PC-9 (cell line): ENCODE measurements at regions of chr12 and their contacts with region 1.

Region 1: DNA sequence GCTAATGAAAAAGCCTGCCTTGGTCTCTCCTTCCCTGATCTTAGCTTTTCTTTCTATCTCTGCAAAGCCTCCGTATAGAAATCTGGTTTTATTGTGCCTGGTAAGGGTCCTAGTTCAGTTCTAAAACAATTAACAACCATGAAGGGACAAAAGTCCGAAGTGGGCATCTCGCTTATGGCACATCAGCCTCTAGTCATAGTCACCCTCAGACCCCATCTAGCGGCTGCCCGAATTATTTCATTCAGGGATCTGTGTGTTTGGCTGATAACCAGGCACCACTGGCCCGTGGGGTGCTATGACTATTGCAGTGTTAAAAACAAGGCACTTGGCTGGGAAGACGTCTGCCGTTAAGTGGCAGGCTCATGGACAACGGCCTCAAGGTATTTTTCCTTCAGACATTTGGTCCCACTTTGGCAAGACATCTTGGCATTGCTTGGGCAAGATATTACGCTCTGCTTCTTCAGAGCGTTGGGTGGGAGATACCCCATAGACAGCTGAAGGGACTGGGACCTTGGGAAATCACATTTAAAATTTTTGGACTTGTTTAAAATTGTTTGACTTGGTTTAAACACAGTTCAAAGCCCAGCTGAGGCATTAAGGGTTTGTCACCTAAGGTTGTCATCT is 87.1 kb downstream of the SINHCAF start:
- DNase-seq: peak in 1 of 2 experiments; percentile 71
- H3K4me3 ChIP-seq: peak overlapping the region; percentile 26; the same call in 1 of the 2 replicates
- H3K27ac ChIP-seq: no peak overlapping the region
- H3K4me1 ChIP-seq: no peaks in the 10 kb centered on the region
- H3K27me3 ChIP-seq: no peaks in the 10 kb centered on the region
- CTCF ChIP-seq: peak; percentile 83

Region 2: GRCh38 chr12:30515351-30515750 is 723.5 kb before region 1 on chr12:
- CTCF ChIA-PET with region 1: no interaction called
- POLR2A ChIA-PET with region 1: no interaction called
- intact Hi-C with region 1: no loop called
- DNase-seq: no peak
- H3K4me3 ChIP-seq: no peak overlapping the region
- H3K27ac ChIP-seq: no peak overlapping the region
- H3K4me1 ChIP-seq: no peaks in the 10 kb centered on the region
- H3K27me3 ChIP-seq: no peaks in the 10 kb centered on the region
- CTCF ChIP-seq: 0 out of 2 replicates have a peak, but pooled peaks have one; percentile 28

Region 3: GRCh38 chr12:30822385-30823155 is 416.3 kb before region 1 on chr12:
- CTCF ChIA-PET with region 1: interaction called, 17 read pairs
- POLR2A ChIA-PET with region 1: no interaction called
- intact Hi-C with region 1: no loop called
- DNase-seq: peak in 1 of 2 experiments; percentile 61
- H3K4me3 ChIP-seq: no peak overlapping the region
- H3K27ac ChIP-seq: no peak overlapping the region
- H3K4me1 ChIP-seq: no peaks in the 10 kb centered on the region
- H3K27me3 ChIP-seq: no peaks in the 10 kb centered on the region
- CTCF ChIP-seq: no peak

Region 4: GRCh38 chr12:30978639-30979038 is 260.2 kb before region 1 on chr12:
- CTCF ChIA-PET with region 1: no interaction called
- POLR2A ChIA-PET with region 1: no interaction called
- intact Hi-C with region 1: loop called (anchors 5 kb)
- DNase-seq: no peak
- H3K4me3 ChIP-seq: no peak overlapping the region
- H3K27ac ChIP-seq: no peak overlapping the region
- H3K4me1 ChIP-seq: peaks cover 14% of the 10 kb centered on the region; the same call in 1 of the 2 replicates
- H3K27me3 ChIP-seq: no peaks in the 10 kb centered on the region
- CTCF ChIP-seq: no peak

Region 5: DNA sequence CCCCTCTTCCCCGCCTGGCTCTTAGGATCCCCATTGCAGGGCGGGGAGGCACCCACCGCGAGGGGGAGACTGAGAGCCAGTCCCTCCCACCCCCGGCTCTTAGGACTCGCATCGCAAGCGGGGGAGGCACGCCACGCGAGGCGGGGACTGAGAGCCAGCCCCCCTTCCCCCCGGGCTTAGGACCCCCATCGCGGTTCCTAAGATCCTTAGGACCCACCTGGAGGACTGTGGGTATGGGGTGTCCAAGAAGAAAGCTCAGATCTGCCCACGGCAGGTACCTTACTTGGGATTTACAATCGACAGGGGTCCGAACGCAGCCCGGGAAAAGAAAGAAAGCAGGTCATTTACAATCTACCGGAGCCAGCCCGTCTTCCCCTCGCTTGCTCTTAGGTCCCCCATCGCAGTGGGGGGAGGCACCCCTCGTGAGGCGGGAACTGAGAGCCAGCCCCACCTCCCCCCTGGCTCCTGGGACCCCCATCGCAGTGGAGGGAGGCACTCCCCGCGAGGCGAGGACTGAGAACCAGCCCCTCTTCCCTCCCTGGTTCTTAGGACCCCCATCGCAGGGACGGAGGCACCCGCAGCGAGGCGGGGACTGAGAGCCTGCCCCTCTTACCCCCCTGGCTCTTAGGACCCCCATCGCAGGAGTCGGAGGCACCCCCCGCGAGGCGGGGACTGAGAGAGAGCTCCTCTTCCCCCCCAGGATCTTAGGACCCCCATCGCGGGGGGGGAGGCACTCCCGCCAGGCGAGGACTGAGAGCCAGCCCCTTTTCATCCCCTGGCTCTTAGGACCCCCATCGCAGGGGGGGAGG is 121.5 kb before region 1 on chr12:
- CTCF ChIA-PET with region 1: no interaction called
- POLR2A ChIA-PET with region 1: no interaction called
- intact Hi-C with region 1: loop called (anchors 5 kb)
- DNase-seq: peak in 1 of 2 experiments; percentile 44
- H3K4me3 ChIP-seq: peak overlapping the region; percentile 54; the same call in 1 of the 2 replicates
- H3K27ac ChIP-seq: no peak overlapping the region
- H3K4me1 ChIP-seq: no peaks in the 10 kb centered on the region
- H3K27me3 ChIP-seq: no peaks in the 10 kb centered on the region
- CTCF ChIP-seq: peak; percentile 48; the same call in 1 of the 2 replicates

Region 6: DNA sequence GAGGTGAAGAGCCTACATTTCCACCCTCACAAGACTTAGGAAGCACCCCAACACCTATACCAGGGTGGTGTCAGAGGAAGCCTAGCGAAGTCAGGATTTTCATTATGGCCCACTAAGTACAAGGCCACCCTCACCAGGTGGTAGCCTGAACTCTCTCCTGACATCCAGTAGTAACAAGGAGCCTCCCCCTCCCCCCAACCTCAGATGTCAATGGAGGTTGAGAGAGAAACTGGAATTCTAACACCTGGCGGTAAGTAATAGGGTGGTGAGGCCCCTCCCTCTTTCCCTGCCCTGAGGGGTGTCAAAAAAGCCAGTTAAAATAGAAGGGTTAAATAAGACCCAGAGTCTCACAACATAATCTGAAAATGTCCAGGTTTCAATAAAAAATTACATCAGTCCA is 49.5 kb after region 1 on chr12:
- CTCF ChIA-PET with region 1: interaction called, 16 read pairs
- POLR2A ChIA-PET with region 1: no interaction called
- intact Hi-C with region 1: no loop called
- DNase-seq: no peak
- H3K4me3 ChIP-seq: no peak overlapping the region
- H3K27ac ChIP-seq: no peak overlapping the region
- H3K4me1 ChIP-seq: no peaks in the 10 kb centered on the region
- H3K27me3 ChIP-seq: no peaks in the 10 kb centered on the region
- CTCF ChIP-seq: no peak

Region 7: DNA sequence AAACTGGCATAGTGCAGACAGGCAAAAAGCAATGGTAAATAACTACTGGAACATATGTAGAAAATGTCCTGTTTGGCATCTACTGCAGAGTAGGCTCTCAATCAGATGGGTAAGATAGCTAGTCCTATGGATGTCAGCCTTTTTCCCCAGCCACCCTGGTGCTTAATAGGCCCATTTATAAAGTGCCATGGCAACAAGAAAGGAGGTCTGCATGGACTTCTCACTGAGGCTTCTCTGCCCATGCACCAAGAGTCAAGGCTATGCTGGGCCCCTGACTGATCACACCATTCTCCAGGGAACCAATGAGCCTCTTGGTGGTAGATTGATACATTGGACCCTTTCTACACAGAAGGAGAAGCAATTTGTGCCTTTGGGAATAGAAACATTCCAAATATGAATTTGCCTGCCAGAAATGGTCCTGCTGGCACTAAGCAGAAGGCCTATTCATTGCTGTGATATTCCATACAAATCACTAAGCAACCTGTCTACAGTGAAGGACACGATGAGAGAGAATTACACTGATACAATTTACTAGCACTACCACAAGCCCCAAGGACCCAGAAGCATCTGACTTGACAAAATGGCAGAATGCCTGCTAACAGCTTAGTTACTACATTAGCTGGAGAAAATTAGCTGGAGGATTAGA is 764.1 kb after region 1 on chr12:
- CTCF ChIA-PET with region 1: no interaction called
- POLR2A ChIA-PET with region 1: no interaction called
- intact Hi-C with region 1: no loop called
- DNase-seq: no peak
- H3K4me3 ChIP-seq: no peak overlapping the region
- H3K27ac ChIP-seq: no peak overlapping the region
- H3K4me1 ChIP-seq: no peaks in the 10 kb centered on the region
- H3K27me3 ChIP-seq: no peaks in the 10 kb centered on the region
- CTCF ChIP-seq: no peak

Region 8: DNA sequence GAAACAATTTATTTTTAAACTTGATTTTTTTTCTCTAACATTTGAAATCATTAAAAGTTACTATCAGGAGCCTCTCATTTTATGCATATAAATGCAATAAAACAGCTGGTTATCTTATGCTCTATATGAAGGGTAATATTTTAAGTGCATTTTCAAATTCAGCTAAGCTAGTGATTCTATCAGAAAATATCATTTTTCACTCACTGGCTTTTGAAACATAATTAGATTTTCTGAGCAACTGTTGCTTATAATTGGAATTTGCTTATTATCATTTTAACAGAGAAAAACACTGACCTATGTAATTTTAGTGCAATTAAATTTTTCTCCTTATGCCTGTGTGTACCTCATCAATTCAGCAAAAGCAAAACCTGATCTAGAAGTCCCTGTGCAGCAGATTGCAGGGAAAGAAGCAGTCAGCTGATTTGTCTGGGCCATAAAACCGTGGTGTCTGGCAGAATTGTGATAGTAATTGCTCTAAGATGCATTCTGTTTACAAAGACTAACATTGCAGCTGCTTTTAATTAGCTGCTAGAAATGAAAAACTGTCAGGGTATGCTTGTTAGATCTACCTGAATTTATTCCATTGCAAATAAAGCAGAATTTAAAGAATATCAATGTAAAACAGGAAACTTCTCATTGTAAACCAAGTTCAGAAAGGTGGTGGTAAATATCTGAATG is 942.8 kb after region 1 on chr12:
- CTCF ChIA-PET with region 1: no interaction called
- POLR2A ChIA-PET with region 1: no interaction called
- intact Hi-C with region 1: no loop called
- DNase-seq: no peak
- H3K4me3 ChIP-seq: no peak overlapping the region
- H3K27ac ChIP-seq: no peak overlapping the region
- H3K4me1 ChIP-seq: no peaks in the 10 kb centered on the region
- H3K27me3 ChIP-seq: no peaks in the 10 kb centered on the region
- CTCF ChIP-seq: no peak